Ascending aorta (tissue), 2 donors: ENCODE measurements at regions of chr10 and their contacts with region 1.

Region 1: GRCh38 chr10:114937962-114938855 is at the start of gene TRUB1:
- DNase-seq: peak; percentile 80 to 97
- H3K4me3 ChIP-seq: peak within 1 kb of the TSS; percentile 88 to 97
- H3K27ac ChIP-seq: peak within 1 kb of the TSS; percentile 76 to 81
- H3K4me1 ChIP-seq: peaks cover 3 to 8% of the 10 kb centered on the region in 2 donors
- H3K27me3 ChIP-seq: no peaks in the 10 kb centered on the region
- CTCF ChIP-seq: no peak
- total RNA-seq, gene TRUB1: 5.4 TPM

Region 2: GRCh38 chr10:114821293-114821914 is 116.8 kb before region 1 on chr10 and contains the start of gene FHIP2A:
- intact Hi-C with region 1: loop called (anchors 5 kb)
- DNase-seq: peak; percentile 43 to 87
- H3K4me3 ChIP-seq: peak within 1 kb of the TSS; percentile 99
- H3K27ac ChIP-seq: peak within 1 kb of the TSS; percentile 94 to 100
- H3K4me1 ChIP-seq: peaks cover 3 to 17% of the 10 kb centered on the region in 2 donors
- H3K27me3 ChIP-seq: no peaks in the 10 kb centered on the region
- CTCF ChIP-seq: peak; percentile 14 to 88 (median 35)
- total RNA-seq, gene FHIP2A: 19.6 TPM

Region 3: GRCh38 chr10:114881901-114882300 is 56.3 kb before region 1 on chr10:
- intact Hi-C with region 1: loop called (anchors 2 kb)
- DNase-seq: no peak
- H3K4me3 ChIP-seq: no peak overlapping the region
- H3K27ac ChIP-seq: peak overlapping the region in 1 of 2 donors; percentile 42
- H3K4me1 ChIP-seq: peaks cover 0 to 2% of the 10 kb centered on the region in 2 donors
- H3K27me3 ChIP-seq: no peaks in the 10 kb centered on the region
- CTCF ChIP-seq: no peak